ENCODE measurements at regions of chr5 and their contacts with region 1.

Region 1: DNA sequence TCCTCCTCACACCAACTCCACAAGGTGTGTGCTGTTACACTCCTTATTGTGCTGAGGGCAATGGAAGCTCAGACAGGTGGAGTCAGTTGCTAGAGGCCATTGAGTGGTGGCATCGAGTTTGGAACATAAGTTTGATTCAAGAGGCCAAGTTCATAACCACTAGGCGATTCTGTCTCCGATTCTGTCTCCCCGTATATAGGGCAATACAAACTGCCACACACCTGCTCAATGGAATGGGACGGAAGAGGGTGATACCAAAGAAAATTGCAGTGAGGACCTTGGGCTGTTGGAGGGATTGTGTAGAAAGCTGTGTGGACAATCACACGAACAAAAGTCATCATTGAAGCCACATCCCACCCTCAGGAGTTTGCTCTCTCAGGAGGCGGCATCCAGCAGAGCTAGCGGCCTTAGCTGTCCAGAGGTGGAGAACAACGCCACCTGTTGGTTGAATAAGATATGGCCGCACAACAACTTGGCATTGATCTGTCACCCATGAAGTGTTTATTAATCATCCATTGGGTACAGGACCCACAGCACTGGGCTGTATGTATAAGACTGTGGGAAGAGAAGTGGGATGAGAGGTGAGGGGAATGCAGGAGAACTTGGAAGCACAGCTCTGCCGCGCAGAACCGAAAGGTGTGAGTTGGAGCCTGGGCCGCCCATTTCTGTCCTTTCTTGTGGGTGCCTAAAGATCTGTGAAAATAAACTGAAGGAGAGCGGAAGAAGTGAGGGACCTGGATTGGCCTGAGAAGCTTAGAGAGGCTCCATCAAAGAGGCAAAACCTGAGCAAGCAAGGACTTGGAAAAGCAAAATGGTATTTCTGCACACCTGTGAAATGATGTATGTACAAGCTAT is 16.1 kb upstream of the NEUROG1 start:
- DNase-seq: peak; percentile 75
- CTCF ChIP-seq: peak; percentile 69

Region 2: GRCh38 chr5:135533334-135533733 is 18.5 kb before region 1 on chr5:
- CTCF ChIA-PET with region 1: interaction called, 13 read pairs
- POLR2A ChIA-PET with region 1: no interaction called
- DNase-seq: no peak
- CTCF ChIP-seq: no peak

Region 3: GRCh38 chr5:135571902-135572301 is 20.1 kb after region 1 on chr5:
- CTCF ChIA-PET with region 1: interaction called, 189 read pairs
- POLR2A ChIA-PET with region 1: no interaction called
- DNase-seq: no peak
- CTCF ChIP-seq: no peak